ENCODE measurements at regions of chr16 and their contacts with region 1.

Region 1: DNA sequence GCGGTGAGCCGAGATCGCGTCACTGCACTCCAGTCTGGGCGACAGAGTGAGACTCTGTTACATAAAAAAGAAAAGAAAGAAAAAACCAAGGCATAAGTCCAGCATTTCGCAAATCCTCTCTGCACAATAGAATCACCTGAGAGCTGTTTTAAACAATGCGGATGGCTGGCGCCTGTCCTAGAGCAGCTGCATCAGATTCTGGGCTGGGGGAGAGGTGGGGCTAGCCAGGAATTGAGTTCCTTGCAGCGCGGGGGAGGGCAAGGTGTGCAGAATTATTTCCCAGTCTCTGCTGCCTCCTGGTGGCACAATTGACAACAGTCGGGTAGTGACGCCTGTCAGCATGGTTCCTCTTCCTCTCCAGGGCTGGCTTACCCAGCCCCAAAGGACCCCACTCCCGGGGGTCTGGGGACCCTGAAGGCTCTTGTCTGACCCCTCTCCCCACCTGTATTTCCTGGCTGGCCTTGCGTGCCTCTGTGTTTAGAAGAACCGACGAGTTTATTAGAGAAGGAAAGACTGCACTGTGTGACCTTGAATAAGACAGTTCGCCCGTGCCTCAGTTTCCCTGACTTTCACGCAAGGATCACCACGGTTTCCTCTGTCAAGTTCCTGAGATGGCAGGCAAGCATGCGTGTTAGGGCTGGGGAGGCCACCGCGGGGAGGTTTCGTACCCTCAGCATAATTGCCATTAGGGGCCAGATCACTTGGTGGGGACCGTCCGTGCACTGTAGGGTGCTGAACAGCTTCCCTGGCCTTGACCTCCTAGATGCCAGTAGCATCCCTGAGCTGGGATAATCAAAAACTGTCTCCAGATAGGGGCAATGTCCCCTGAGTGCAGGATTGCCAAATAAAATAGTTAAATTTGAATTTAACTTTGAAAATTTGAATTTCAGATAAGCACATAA is 41.0 kb upstream of the PLCG2 start:
- DNase-seq: peak; percentile 52 to 87 (median 78)
- H3K4me3 ChIP-seq: peak overlapping the region in 54 of 59 donors; percentile 13 to 68 (median 42)
- H3K27ac ChIP-seq: peak overlapping the region in 22 of 59 donors; percentile 5 to 79 (median 43)
- H3K27me3 ChIP-seq: no peaks in the 10 kb centered on the region
- CTCF ChIP-seq: peak; percentile 57 to 95 (median 86)

Region 2: DNA sequence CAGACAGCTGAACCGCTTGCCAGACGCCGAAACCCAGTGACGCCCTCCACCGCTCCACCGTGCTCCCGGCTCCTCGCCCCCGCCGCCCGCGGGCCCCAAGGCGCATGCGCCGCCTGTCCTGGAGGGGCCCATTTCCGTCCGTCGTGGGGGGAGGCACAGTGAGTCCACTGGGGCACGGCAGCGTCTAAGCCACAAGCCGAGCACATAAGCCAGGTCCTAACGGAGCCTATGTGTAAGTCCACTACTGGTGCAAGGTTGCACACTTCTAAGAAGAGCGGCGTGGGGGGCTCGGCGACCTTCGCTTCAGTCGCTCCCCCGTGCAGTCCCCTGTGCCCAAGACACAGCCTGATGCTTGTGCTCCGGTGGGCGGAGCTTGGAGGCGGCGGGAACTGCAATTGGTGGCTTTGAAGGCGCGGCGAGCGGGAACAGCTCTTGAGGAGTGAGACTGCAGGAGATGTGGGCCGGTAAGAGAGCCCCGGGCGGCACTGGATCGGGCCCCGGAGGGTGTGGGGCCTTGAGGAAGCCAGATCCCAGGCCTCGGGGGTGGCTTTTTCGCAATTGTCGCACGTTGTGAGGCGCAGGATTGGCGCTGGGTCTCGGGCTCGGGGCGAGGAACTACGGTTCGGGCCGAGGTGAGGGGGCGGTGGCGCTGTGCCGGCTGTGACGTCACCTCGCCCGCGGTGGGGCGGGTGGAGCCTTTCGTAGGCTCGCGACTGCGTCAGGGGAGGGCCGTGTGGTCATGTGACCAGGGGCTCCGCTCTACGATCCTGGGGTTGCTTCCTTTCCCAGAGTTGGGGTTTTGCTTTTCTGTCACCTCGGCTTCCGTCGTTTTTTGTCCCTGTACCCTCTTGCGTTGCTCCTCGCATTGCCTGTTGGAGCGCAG is 731.1 kb before region 1 on chr16 and contains the starts of genes CENPN and CMC2:
- intact Hi-C with region 1: loop called in 1 of 2 experiments (anchors 10 kb)
- DNase-seq: peak; percentile 98 to 99 (median 99)
- H3K4me3 ChIP-seq: peak within 1 kb of the TSS; percentile 63 to 100 (median 97)
- H3K27ac ChIP-seq: peak within 1 kb of the TSS; percentile 94 to 100 (median 100)
- H3K27me3 ChIP-seq: no peaks in the 10 kb centered on the region
- CTCF ChIP-seq: peak in 27 of 56 donors; percentile 8 to 42 (median 28)
- total RNA-seq, gene CENPN: 2.4 to 13.8 (median 6.3) TPM
- total RNA-seq, gene CMC2: 53.6 to 107 (median 84.9) TPM

Region 3: GRCh38 chr16:81204798-81205680 is 533.1 kb before region 1 on chr16:
- intact Hi-C with region 1: loop called in 1 of 2 experiments (anchors 5 kb)
- DNase-seq: peak in 4 of 10 donors; percentile 9 to 56 (median 43)
- H3K4me3 ChIP-seq: peak overlapping the region in 1 of 59 donors; percentile 33
- H3K27ac ChIP-seq: peak overlapping the region in 24 of 59 donors; percentile 0 to 82 (median 54)
- H3K27me3 ChIP-seq: peaks cover 0 to 4% (median 0%) of the 10 kb centered on the region in 45 donors
- CTCF ChIP-seq: peak; percentile 46 to 87 (median 74)

Region 4: GRCh38 chr16:81366316-81366932 is 371.7 kb before region 1 on chr16:
- intact Hi-C with region 1: loop called (anchors 2 to 10 kb)
- DNase-seq: peak in 1 of 10 donors; percentile 9
- H3K4me3 ChIP-seq: no peak overlapping the region
- H3K27ac ChIP-seq: no peak overlapping the region
- H3K27me3 ChIP-seq: no peaks in the 10 kb centered on the region
- CTCF ChIP-seq: peak; percentile 61 to 90 (median 76)

Region 5: DNA sequence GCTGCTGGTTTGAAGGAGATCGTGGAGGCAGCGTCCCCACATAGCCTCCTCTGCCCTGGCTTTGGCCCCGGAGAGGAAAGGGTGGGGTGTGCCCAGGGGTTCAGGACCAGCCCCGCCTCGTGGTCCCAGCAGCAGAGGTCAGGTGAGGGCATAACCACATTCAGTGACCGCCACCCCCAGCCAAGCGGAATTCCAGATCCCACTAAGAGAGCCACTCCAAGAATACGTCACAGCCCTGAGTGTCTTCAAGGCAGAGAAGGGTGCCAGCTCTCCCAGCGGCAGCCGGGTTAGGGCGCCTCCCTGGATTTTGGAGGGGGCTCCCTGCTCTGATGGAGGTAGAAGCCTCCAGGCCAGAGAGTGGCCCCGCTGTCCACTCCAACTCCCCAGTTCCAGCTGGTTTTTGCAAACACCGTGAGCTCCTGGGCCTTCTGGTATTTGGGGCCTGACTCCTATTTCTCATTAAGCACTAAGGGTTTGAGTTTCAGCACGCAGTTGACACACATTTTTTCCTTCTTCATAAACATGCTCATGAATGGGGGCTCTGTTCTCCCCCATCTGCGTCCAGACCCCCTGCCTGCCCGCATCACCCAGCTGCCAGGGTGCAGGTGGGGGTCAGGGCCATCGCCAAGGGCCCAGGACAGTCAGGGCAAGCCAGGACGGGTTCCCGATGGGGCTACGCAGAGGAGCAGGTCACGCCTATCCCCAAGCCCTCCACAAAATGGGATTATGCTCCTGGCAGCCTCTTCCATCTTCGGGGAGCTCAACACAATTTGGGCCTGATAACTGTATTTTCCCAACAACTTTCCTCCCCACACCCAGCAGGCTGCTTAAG is 57.5 kb before region 1 on chr16:
- intact Hi-C with region 1: no loop called
- DNase-seq: no peak
- H3K4me3 ChIP-seq: no peak overlapping the region
- H3K27ac ChIP-seq: peak overlapping the region in 10 of 59 donors; percentile 1 to 42 (median 9)
- H3K27me3 ChIP-seq: no peaks in the 10 kb centered on the region
- CTCF ChIP-seq: no peak

Measured in dorsolateral prefrontal cortex (tissue), 120 donors.